ENCODE measurements at regions of chr22 and their contacts with region 1.

Region 1: GRCh38 chr22:46122511-46122971 is 27.8 kb upstream of the PPARA start:
- DNase-seq: peak; percentile 80
- H3K4me3 Mint-ChIP-seq: no peak overlapping the region
- H3K27ac Mint-ChIP-seq: no peak overlapping the region
- H3K4me1 Mint-ChIP-seq: peaks cover 9% of the 10 kb centered on the region
- H3K27me3 Mint-ChIP-seq: peaks cover 8% of the 10 kb centered on the region

Region 2: GRCh38 chr22:46108564-46109473 is 13.7 kb before region 1 on chr22:
- CTCF ChIA-PET with region 1: no interaction called
- DNase-seq: no peak
- H3K4me3 Mint-ChIP-seq: no peak overlapping the region
- H3K27ac Mint-ChIP-seq: no peak overlapping the region
- H3K4me1 Mint-ChIP-seq: no peaks in the 10 kb centered on the region
- H3K27me3 Mint-ChIP-seq: no peaks in the 10 kb centered on the region

Region 3: GRCh38 chr22:46250035-46250782 is 127.7 kb after region 1 on chr22 and contains the start of gene CDPF1:
- CTCF ChIA-PET with region 1: no interaction called
- DNase-seq: peak; percentile 93
- H3K4me3 Mint-ChIP-seq: peak within 1 kb of the TSS; percentile 83
- H3K27ac Mint-ChIP-seq: peak within 1 kb of the TSS; percentile 82
- H3K4me1 Mint-ChIP-seq: peaks cover 36% of the 10 kb centered on the region
- H3K27me3 Mint-ChIP-seq: peaks cover 11% of the 10 kb centered on the region

Region 4: DNA sequence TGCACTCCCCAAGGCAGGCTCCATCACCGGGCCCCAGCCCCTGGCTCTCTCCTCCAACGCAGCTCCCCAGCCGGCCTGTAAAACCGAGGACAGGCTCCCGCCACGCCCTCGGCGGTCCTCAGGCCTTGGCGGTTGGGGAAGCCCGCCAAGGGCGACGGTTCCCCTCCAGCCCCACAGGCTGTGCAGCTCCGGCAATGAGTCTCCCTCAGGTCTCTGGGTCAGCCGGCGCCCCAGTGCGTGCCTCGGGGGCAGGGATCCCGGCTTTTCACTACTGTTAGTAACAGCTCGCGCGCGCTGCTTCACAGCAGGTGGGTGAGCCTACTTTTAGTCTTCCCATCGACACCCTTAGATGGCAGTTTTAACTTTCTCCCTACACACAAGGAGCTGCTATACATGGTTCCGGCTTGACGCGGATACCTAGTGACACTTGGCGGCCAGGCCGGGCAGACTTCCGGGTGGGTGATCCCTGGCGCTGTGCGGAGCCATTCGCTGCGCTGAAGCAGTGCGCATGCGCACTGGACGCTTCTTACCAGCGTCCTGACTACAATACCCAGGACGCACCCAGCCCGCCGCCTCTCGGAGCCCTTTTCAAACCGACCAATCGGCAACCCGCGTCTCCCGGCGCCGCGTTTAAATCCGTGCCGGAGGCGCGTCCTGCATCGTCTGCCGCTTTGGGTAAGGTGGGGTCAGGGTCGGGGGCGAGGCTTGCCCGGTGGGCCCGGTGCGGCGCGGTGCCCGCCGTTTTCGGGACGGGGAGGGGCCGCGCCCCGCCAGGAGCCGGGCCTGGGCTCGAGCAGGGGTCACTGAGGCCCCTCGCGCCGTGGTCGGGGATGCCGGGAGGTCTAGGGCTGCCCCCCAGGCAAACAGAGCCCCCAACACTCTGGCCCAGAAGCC is 174.0 kb after region 1 on chr22 and contains the start of gene GTSE1:
- CTCF ChIA-PET with region 1: interaction called, 18 read pairs
- DNase-seq: peak; percentile 99
- H3K4me3 Mint-ChIP-seq: peak within 1 kb of the TSS; percentile 86
- H3K27ac Mint-ChIP-seq: peak within 1 kb of the TSS; percentile 97
- H3K4me1 Mint-ChIP-seq: peaks cover 73% of the 10 kb centered on the region
- H3K27me3 Mint-ChIP-seq: no peaks in the 10 kb centered on the region

Region 5: DNA sequence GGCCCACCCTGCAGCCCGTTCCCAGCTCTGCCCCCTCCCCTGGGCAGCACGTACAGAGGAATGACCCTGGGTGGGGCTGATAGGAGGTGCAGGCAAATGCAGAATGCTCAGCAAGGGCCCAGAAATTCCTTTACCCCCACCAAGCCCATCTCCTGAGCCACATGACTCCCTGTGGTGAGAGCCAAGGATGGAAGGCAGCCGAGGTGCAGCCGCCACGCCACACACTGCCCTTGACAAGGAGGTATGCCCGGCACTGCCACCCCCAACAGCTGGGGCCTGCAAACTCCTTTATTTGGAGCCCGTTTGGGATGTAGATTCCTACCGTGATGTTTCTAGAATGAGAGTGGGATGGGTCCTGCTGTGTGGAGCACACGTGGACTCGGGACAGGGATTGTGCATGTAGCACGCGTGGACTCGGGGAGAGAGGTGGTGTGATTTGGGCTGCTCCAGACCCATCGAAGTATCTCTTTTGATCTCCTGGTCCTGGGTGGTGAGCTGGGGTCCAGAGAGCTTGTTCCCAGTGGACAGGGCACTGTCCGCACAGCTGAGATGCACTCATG is 187.1 kb after region 1 on chr22:
- CTCF ChIA-PET with region 1: interaction called, 37 read pairs
- DNase-seq: no peak
- H3K4me3 Mint-ChIP-seq: no peak overlapping the region
- H3K27ac Mint-ChIP-seq: no peak overlapping the region
- H3K4me1 Mint-ChIP-seq: peaks cover 8% of the 10 kb centered on the region
- H3K27me3 Mint-ChIP-seq: no peaks in the 10 kb centered on the region

Region 6: DNA sequence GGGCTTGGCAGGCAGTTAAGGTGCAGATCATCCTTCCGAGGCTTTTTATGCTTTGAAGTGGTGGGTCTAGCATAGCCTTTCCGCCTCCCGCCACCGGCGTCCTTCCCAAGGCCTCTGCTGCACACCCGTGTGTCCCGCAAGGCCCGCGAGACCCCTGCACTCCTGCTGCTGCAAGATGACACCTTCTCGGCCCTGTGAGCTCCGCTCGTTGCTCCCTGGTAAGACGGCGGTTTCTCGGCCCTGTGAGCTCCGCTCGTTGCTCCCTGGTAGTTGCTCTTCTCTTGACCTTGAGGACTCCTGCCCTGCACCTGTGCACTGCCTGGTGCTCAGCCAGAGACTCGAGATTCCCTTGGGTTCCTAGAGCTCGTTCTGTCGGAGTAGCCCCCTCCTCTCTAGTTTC is 195.1 kb after region 1 on chr22:
- CTCF ChIA-PET with region 1: interaction called, 37 read pairs
- DNase-seq: no peak
- H3K4me3 Mint-ChIP-seq: no peak overlapping the region
- H3K27ac Mint-ChIP-seq: no peak overlapping the region
- H3K4me1 Mint-ChIP-seq: no peaks in the 10 kb centered on the region
- H3K27me3 Mint-ChIP-seq: no peaks in the 10 kb centered on the region